A549 (cell line): ENCODE measurements at regions of chr12 and their contacts with region 1.

Region 1: GRCh38 chr12:92145731-92146496 is at the start of gene BTG1:
- DNase-seq: peak; percentile 95 to 100
- ATAC-seq: peak; percentile 82 to 85
- H3K4me3 ChIP-seq: peak within 1 kb of the TSS; percentile 91
- H3K27ac ChIP-seq: peak within 1 kb of the TSS; percentile 92 to 98
- H3K4me1 ChIP-seq: peaks cover 10% of the 10 kb centered on the region
- CTCF ChIP-seq: no peak
- EP300 ChIP-seq: no peak
- POLR2A ChIP-seq: peak; percentile 100
- RAD21 ChIP-seq: peak; percentile 35 to 37; a peak in 4 of 5 replicates
- polyA plus RNA-seq, gene BTG1: 138 and 215 TPM in 2 replicates

Region 2: GRCh38 chr12:91778938-91779400 is 366.9 kb before region 1 on chr12:
- CTCF ChIA-PET with region 1: no interaction called
- POLR2A ChIA-PET with region 1: interaction called, 27 read pairs
- DNase-seq: peak; percentile 72 to 96
- ATAC-seq: peak; percentile 99
- H3K4me3 ChIP-seq: 0 out of 3 replicates have a peak overlapping the region, but pooled peaks have one; percentile 25
- H3K27ac ChIP-seq: peak overlapping the region; percentile 58 to 80
- H3K4me1 ChIP-seq: peaks cover 26% of the 10 kb centered on the region
- CTCF ChIP-seq: no peak
- EP300 ChIP-seq: peak; percentile 53 to 73; a peak in 3 of 5 replicates
- POLR2A ChIP-seq: no peak
- RAD21 ChIP-seq: peak in 1 of 2 experiments; percentile 36; a peak in 1 of 5 replicates

Region 3: GRCh38 chr12:92408072-92408900 is 262.4 kb after region 1 on chr12:
- CTCF ChIA-PET with region 1: interaction called, 3 read pairs
- POLR2A ChIA-PET with region 1: interaction called, 12 read pairs
- DNase-seq: peak; percentile 30 to 65
- ATAC-seq: peak; percentile 81 to 88
- H3K4me3 ChIP-seq: no peak overlapping the region
- H3K27ac ChIP-seq: no peak overlapping the region
- H3K4me1 ChIP-seq: 0 out of 3 replicates have a peak, but pooled peaks cover 4% of the 10 kb centered on the region
- CTCF ChIP-seq: peak; percentile 41
- EP300 ChIP-seq: no peak
- POLR2A ChIP-seq: no peak
- RAD21 ChIP-seq: peak; percentile 59 to 71

Region 4: GRCh38 chr12:92551853-92552397 is 406.0 kb after region 1 on chr12:
- CTCF ChIA-PET with region 1: no interaction called
- POLR2A ChIA-PET with region 1: interaction called, 14 read pairs
- DNase-seq: peak; percentile 26 to 55
- ATAC-seq: peak; percentile 80 to 81
- H3K4me3 ChIP-seq: no peak overlapping the region
- H3K27ac ChIP-seq: peak overlapping the region; percentile 59 to 83; a peak in 5 of 6 replicates
- H3K4me1 ChIP-seq: peaks cover 24% of the 10 kb centered on the region
- CTCF ChIP-seq: no peak
- EP300 ChIP-seq: peak in 1 of 2 experiments; percentile 29; a peak in 1 of 5 replicates
- POLR2A ChIP-seq: no peak
- RAD21 ChIP-seq: no peak

Region 5: GRCh38 chr12:92602476-92602875 is 456.6 kb after region 1 on chr12:
- CTCF ChIA-PET with region 1: interaction called, 3 read pairs
- POLR2A ChIA-PET with region 1: interaction called, 15 read pairs
- DNase-seq: peak in 1 of 2 experiments; percentile 82
- ATAC-seq: peak; percentile 19 to 47; a peak in 4 of 6 replicates
- H3K4me3 ChIP-seq: no peak overlapping the region
- H3K27ac ChIP-seq: peak overlapping the region; percentile 90 to 98
- H3K4me1 ChIP-seq: peaks cover 37% of the 10 kb centered on the region
- CTCF ChIP-seq: no peak
- EP300 ChIP-seq: peak in 1 of 2 experiments; percentile 37; a peak in 1 of 5 replicates
- POLR2A ChIP-seq: no peak
- RAD21 ChIP-seq: no peak; a peak in 1 of 5 replicates